ENCODE measurements at regions of chr6 and their contacts with region 1.

Region 1: GRCh38 chr6:106979427-106979884 is 4.9 kb upstream of the CD24 start:
- DNase-seq: peak; percentile 73
- ATAC-seq: peak; percentile 79
- H3K4me3 ChIP-seq: no peak overlapping the region
- H3K27ac ChIP-seq: no peak overlapping the region
- H3K4me1 ChIP-seq: peaks cover 13% of the 10 kb centered on the region
- H3K27me3 ChIP-seq: peaks cover 0 to 10% of the 10 kb centered on the region in 2 experiments; a peak in 2 of 5 replicates
- CTCF ChIP-seq: peak; percentile 96
- EP300 ChIP-seq: no peak
- POLR2A ChIP-seq: no peak
- RAD21 ChIP-seq: peak; percentile 95

Region 2: GRCh38 chr6:106339334-106340029 is 640.0 kb before region 1 on chr6:
- CTCF ChIA-PET with region 1: no interaction called
- POLR2A ChIA-PET with region 1: no interaction called
- in situ Hi-C with region 1: loop called (anchors 25 kb)
- intact Hi-C with region 1: loop called (anchors 2 kb)
- DNase-seq: peak; percentile 46
- ATAC-seq: peak; percentile 98
- H3K4me3 ChIP-seq: no peak overlapping the region
- H3K27ac ChIP-seq: no peak overlapping the region
- H3K4me1 ChIP-seq: no peaks in the 10 kb centered on the region
- H3K27me3 ChIP-seq: peaks cover 0 to 8% of the 10 kb centered on the region in 2 experiments; a peak in 2 of 5 replicates
- CTCF ChIP-seq: peak; percentile 73
- EP300 ChIP-seq: no peak
- POLR2A ChIP-seq: no peak
- RAD21 ChIP-seq: no peak

Region 3: GRCh38 chr6:106608062-106608668 is 371.3 kb before region 1 on chr6:
- CTCF ChIA-PET with region 1: interaction called, 33 read pairs
- POLR2A ChIA-PET with region 1: no interaction called
- in situ Hi-C with region 1: loop called (anchors 10 kb)
- intact Hi-C with region 1: loop called (anchors 1 kb)
- DNase-seq: peak; percentile 79
- ATAC-seq: peak; percentile 83
- H3K4me3 ChIP-seq: no peak overlapping the region
- H3K27ac ChIP-seq: no peak overlapping the region
- H3K4me1 ChIP-seq: no peaks in the 10 kb centered on the region
- H3K27me3 ChIP-seq: no peaks in the 10 kb centered on the region
- CTCF ChIP-seq: peak; percentile 76
- EP300 ChIP-seq: no peak
- POLR2A ChIP-seq: no peak
- RAD21 ChIP-seq: peak; percentile 47; the same call in 1 of the 2 replicates

Region 4: DNA sequence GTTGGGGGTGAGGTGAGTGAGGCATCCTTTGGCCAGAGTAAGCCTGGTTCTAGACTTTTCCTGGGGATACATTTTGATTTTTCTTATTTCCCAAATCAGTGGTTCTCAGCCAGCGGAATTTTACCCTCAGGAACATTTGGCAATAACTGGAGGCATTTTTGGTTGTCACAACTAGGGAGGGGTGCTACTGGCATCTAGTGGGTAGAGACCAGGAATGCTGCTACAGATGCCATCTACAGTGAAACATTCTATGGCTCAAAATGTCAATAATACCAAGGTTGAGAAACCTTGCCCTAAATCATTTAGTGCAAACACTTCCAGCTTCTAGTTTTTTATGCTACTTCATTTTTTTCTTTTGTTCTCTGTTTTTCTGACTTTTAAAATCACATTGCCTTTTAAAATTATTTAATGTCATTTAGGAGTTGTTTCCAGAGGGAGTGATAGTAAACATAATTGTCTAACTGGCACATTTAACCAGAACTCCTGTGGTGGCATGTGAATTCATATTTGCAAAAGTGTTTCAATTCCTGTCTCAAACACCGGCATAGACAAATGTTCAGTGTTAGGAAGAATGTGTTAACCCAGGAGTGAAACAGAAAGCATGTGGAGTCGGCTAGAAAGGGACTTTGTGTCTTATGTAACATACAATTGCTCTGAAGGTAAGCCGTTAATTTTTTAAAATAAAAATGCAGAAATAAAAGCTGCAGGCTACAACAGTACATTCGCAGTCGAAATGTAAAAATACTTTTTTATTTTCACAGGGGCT is 291.1 kb before region 1 on chr6:
- CTCF ChIA-PET with region 1: no interaction called
- POLR2A ChIA-PET with region 1: no interaction called
- in situ Hi-C with region 1: no loop called
- intact Hi-C with region 1: loop called (anchors 10 kb)
- DNase-seq: peak; percentile 63
- ATAC-seq: peak; percentile 78
- H3K4me3 ChIP-seq: peak overlapping the region in 2 of 3 experiments; percentile 34 to 55; a peak in 3 of 6 replicates
- H3K27ac ChIP-seq: peak overlapping the region; percentile 46
- H3K4me1 ChIP-seq: peaks cover 15% of the 10 kb centered on the region
- H3K27me3 ChIP-seq: no peaks in the 10 kb centered on the region
- CTCF ChIP-seq: peak; percentile 50
- EP300 ChIP-seq: no peak
- POLR2A ChIP-seq: no peak
- RAD21 ChIP-seq: 0 out of 2 replicates have a peak, but pooled peaks have one; percentile 13

Region 5: GRCh38 chr6:106883808-106884262 is 95.6 kb before region 1 on chr6:
- CTCF ChIA-PET with region 1: no interaction called
- POLR2A ChIA-PET with region 1: no interaction called
- in situ Hi-C with region 1: loop called (anchors 5 kb)
- intact Hi-C with region 1: loop called (anchors 10 kb)
- DNase-seq: peak; percentile 36
- ATAC-seq: peak; percentile 48
- H3K4me3 ChIP-seq: no peak overlapping the region
- H3K27ac ChIP-seq: no peak overlapping the region
- H3K4me1 ChIP-seq: peaks cover 50% of the 10 kb centered on the region
- H3K27me3 ChIP-seq: no peaks in the 10 kb centered on the region; a peak in 1 of 5 replicates
- CTCF ChIP-seq: peak; percentile 49
- EP300 ChIP-seq: no peak
- POLR2A ChIP-seq: no peak
- RAD21 ChIP-seq: no peak

Region 6: GRCh38 chr6:107209406-107210305 is 230.2 kb after region 1 on chr6:
- CTCF ChIA-PET with region 1: no interaction called
- POLR2A ChIA-PET with region 1: no interaction called
- in situ Hi-C with region 1: no loop called
- intact Hi-C with region 1: no loop called
- DNase-seq: no peak
- ATAC-seq: no peak
- H3K4me3 ChIP-seq: no peak overlapping the region
- H3K27ac ChIP-seq: no peak overlapping the region
- H3K4me1 ChIP-seq: peaks cover 15% of the 10 kb centered on the region
- H3K27me3 ChIP-seq: no peaks in the 10 kb centered on the region
- CTCF ChIP-seq: no peak
- EP300 ChIP-seq: no peak
- POLR2A ChIP-seq: no peak
- RAD21 ChIP-seq: no peak

Measured in HepG2 (cell line).